ENCODE measurements at regions of chr12 and their contacts with region 1.

Region 1: GRCh38 chr12:110893956-110894355 is 26.4 kb downstream of the MYL2 start:
- DNase-seq: no peak
- ATAC-seq: no peak
- H3K4me3 ChIP-seq: no peak overlapping the region
- H3K27ac ChIP-seq: no peak overlapping the region
- H3K4me1 ChIP-seq: peaks cover 0 to 4% of the 10 kb centered on the region in 2 experiments; a peak in 1 of 5 replicates
- H3K27me3 ChIP-seq: peaks cover 3 to 17% of the 10 kb centered on the region in 2 experiments
- CTCF ChIP-seq: no peak
- EP300 ChIP-seq: no peak
- POLR2A ChIP-seq: no peak
- RAD21 ChIP-seq: no peak

Region 2: GRCh38 chr12:110513842-110514241 is 380.1 kb before region 1 on chr12:
- CTCF ChIA-PET with region 1: no interaction called
- POLR2A ChIA-PET with region 1: no interaction called
- in situ Hi-C with region 1: no loop called
- intact Hi-C with region 1: no loop called
- DNase-seq: no peak
- ATAC-seq: no peak
- H3K4me3 ChIP-seq: no peak overlapping the region
- H3K27ac ChIP-seq: no peak overlapping the region
- H3K4me1 ChIP-seq: no peaks in the 10 kb centered on the region; a peak in 1 of 5 replicates
- H3K27me3 ChIP-seq: no peaks in the 10 kb centered on the region
- CTCF ChIP-seq: no peak
- EP300 ChIP-seq: no peak
- POLR2A ChIP-seq: no peak
- RAD21 ChIP-seq: no peak

Region 3: GRCh38 chr12:110790301-110790700 is 103.7 kb before region 1 on chr12:
- CTCF ChIA-PET with region 1: no interaction called
- POLR2A ChIA-PET with region 1: no interaction called
- in situ Hi-C with region 1: no loop called
- intact Hi-C with region 1: no loop called
- DNase-seq: no peak
- ATAC-seq: no peak
- H3K4me3 ChIP-seq: no peak overlapping the region
- H3K27ac ChIP-seq: no peak overlapping the region
- H3K4me1 ChIP-seq: no peaks in the 10 kb centered on the region; a peak in 1 of 5 replicates
- H3K27me3 ChIP-seq: no peaks in the 10 kb centered on the region; a peak in 2 of 5 replicates
- CTCF ChIP-seq: no peak
- EP300 ChIP-seq: no peak
- POLR2A ChIP-seq: no peak
- RAD21 ChIP-seq: no peak

Region 4: DNA sequence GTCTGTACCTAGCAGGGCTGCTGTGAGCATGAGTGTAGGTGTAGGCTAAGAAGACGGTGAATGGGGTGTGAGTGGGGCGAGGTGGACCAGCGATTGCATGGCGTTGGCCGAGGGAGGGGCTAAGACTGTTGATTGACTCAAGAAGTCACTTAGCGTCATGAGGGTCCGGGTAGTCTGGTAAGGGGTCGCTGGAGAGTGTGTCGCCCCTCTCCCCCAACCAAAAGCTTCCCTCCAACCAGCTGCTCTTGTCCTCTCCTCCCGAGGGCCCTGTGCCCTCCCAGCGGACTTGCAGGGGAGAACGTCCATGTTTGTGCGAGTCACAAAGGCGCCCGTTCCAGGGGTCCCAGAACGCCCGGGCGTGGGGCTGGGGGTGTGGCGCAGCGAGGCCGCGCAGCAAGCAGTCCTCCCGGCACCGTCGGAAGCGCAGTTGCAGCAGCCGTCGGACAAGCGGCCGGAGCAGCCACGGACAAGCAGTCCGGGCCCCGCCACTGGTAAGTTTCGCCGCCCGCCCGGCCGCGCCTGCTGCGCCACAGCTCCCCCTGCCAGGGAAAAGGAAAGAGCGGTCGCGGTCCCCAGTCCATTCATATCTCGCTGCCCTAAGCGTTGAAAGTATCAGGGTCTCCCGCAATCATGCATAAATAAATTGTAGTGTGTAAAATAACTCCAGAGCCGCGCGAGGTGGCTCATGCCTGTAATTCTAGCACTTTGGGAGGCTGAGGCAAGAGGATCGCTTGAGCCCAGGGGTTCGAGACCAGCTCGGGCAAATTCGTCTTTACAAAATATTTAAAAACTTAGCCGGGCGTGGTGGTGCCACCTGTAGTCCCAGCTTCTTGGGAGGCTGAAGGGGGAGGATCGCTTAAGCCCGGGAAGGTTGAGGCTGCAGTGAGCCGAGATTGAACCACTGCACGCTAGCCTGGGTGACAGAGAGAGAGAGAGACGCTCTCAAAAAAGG is 47.1 kb before region 1 on chr12 and contains the start of gene CCDC63:
- CTCF ChIA-PET with region 1: no interaction called
- POLR2A ChIA-PET with region 1: no interaction called
- in situ Hi-C with region 1: no loop called
- intact Hi-C with region 1: loop called (anchors 5 kb)
- DNase-seq: peak; percentile 50 to 61 (median 56)
- ATAC-seq: peak; percentile 96
- H3K4me3 ChIP-seq: peak within 1 kb of the TSS; percentile 36
- H3K27ac ChIP-seq: no peak within 1 kb of the TSS
- H3K4me1 ChIP-seq: peaks cover 0 to 6% of the 10 kb centered on the region in 2 experiments; a peak in 2 of 5 replicates
- H3K27me3 ChIP-seq: peaks cover 24 to 55% of the 10 kb centered on the region in 2 experiments; a peak in 4 of 5 replicates
- CTCF ChIP-seq: peak; percentile 57 to 61 (median 58)
- EP300 ChIP-seq: no peak
- POLR2A ChIP-seq: no peak
- RAD21 ChIP-seq: peak; percentile 34 to 46
- polyA plus RNA-seq, gene CCDC63: not detected

Region 5: DNA sequence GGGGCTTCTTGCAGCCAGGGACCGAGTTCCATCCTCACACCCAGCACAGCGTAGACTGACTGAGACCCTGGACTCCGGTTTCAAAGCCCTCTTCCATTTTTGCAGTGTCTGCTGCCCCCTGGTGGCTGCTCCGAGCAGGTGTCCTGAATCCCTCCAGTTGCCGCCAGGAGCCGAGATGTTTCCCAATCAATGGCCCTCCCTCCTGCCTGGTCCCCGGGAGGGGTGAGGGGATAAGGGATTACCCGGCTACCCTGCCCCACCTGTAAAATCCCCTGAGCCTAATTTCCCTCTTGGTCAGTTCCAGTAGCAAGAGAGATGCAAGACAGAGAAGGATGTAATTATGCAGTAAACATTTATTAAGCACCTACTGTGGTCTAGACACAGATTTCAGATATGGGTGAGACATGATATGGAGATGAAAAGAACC is 419.9 kb after region 1 on chr12:
- CTCF ChIA-PET with region 1: interaction called, 10 read pairs
- POLR2A ChIA-PET with region 1: no interaction called
- in situ Hi-C with region 1: no loop called
- intact Hi-C with region 1: loop called (anchors 2 kb)
- DNase-seq: peak; percentile 75 to 90 (median 86)
- ATAC-seq: peak; percentile 93
- H3K4me3 ChIP-seq: no peak overlapping the region
- H3K27ac ChIP-seq: no peak overlapping the region
- H3K4me1 ChIP-seq: peaks cover 0 to 5% of the 10 kb centered on the region in 2 experiments; a peak in 2 of 5 replicates
- H3K27me3 ChIP-seq: peaks cover 14 to 35% of the 10 kb centered on the region in 2 experiments; a peak in 4 of 5 replicates
- CTCF ChIP-seq: peak; percentile 90 to 92 (median 91)
- EP300 ChIP-seq: no peak
- POLR2A ChIP-seq: no peak
- RAD21 ChIP-seq: peak; percentile 64 to 89